Activated CD8-positive, alpha-beta T cell treated with anti-CD3 and anti-CD28 coated beads for 36 hours (primary cell): ENCODE measurements at regions of chr1 and their contacts with region 1.

Region 1: DNA sequence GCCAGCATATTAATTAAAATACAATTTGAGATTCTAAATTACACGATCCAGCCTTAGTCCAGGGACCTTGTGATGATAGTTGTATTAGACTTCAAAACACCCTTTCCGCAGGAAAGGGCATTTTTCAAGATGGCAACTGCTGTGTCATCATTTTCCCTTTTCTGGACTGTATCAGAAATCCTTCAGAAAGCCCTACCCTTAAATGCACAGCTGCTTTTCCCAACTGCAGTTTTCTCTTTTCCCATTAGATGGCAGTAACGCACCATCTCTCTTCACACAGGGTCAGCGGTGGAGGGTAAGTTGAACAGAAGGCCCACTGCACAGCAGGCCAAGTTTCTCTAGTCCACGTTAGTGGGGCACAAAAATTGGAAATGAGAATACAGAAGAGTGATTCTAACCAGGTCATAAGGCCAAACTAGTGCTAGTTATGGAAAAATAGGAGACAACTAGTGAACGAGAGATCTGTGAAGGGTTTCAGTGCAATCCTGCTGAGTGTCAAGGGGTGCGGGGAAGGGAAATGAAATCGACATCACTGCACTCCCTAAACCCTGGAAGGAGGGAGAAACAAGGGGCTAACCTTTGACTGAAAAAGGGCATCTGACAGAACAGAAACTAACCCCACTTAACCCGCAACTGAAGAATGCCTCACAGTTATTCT is 22.1 kb upstream of the TDRD10 start:
- DNase-seq: peak; percentile 69
- ATAC-seq: peak; percentile 94
- H3K4me3 Mint-ChIP-seq: no peak overlapping the region
- H3K27ac Mint-ChIP-seq: no peak overlapping the region
- H3K4me1 Mint-ChIP-seq: peaks cover 18% of the 10 kb centered on the region
- H3K27me3 Mint-ChIP-seq: peaks cover 4% of the 10 kb centered on the region
- CTCF ChIP-seq: peak; percentile 98

Region 2: GRCh38 chr1:154324669-154325582 is 155.0 kb before region 1 on chr1 and contains the start of gene ATP8B2:
- CTCF ChIA-PET with region 1: interaction called, 10 read pairs
- POLR2A ChIA-PET with region 1: no interaction called
- intact Hi-C with region 1: no loop called
- DNase-seq: peak; percentile 89
- ATAC-seq: peak; percentile 69
- H3K4me3 Mint-ChIP-seq: peak within 1 kb of the TSS; percentile 100
- H3K27ac Mint-ChIP-seq: peak within 1 kb of the TSS; percentile 96
- H3K4me1 Mint-ChIP-seq: peaks cover 39% of the 10 kb centered on the region
- H3K27me3 Mint-ChIP-seq: no peaks in the 10 kb centered on the region
- CTCF ChIP-seq: peak; percentile 96
- total RNA-seq, gene ATP8B2: 52.2 to 54.7 TPM

Region 3: GRCh38 chr1:154404984-154405761 is 74.7 kb before region 1 on chr1 and contains the start of gene IL6R:
- CTCF ChIA-PET with region 1: interaction called, 10 read pairs
- POLR2A ChIA-PET with region 1: no interaction called
- intact Hi-C with region 1: no loop called
- DNase-seq: peak; percentile 74
- ATAC-seq: peak; percentile 48
- H3K4me3 Mint-ChIP-seq: peak within 1 kb of the TSS; percentile 70
- H3K27ac Mint-ChIP-seq: peak within 1 kb of the TSS; percentile 78
- H3K4me1 Mint-ChIP-seq: peaks cover 89% of the 10 kb centered on the region
- H3K27me3 Mint-ChIP-seq: no peaks in the 10 kb centered on the region
- CTCF ChIP-seq: peak; percentile 42
- total RNA-seq, gene IL6R: 2.2 to 2.5 TPM

Region 4: GRCh38 chr1:154493276-154493675 is 13.4 kb after region 1 on chr1:
- CTCF ChIA-PET with region 1: interaction called, 30 read pairs
- POLR2A ChIA-PET with region 1: interaction called, 4 read pairs
- intact Hi-C with region 1: no loop called
- DNase-seq: peak; percentile 20
- ATAC-seq: peak; percentile 27
- H3K4me3 Mint-ChIP-seq: no peak overlapping the region
- H3K27ac Mint-ChIP-seq: no peak overlapping the region
- H3K4me1 Mint-ChIP-seq: peaks cover 39% of the 10 kb centered on the region
- H3K27me3 Mint-ChIP-seq: peaks cover 5% of the 10 kb centered on the region
- CTCF ChIP-seq: no peak

Region 5: DNA sequence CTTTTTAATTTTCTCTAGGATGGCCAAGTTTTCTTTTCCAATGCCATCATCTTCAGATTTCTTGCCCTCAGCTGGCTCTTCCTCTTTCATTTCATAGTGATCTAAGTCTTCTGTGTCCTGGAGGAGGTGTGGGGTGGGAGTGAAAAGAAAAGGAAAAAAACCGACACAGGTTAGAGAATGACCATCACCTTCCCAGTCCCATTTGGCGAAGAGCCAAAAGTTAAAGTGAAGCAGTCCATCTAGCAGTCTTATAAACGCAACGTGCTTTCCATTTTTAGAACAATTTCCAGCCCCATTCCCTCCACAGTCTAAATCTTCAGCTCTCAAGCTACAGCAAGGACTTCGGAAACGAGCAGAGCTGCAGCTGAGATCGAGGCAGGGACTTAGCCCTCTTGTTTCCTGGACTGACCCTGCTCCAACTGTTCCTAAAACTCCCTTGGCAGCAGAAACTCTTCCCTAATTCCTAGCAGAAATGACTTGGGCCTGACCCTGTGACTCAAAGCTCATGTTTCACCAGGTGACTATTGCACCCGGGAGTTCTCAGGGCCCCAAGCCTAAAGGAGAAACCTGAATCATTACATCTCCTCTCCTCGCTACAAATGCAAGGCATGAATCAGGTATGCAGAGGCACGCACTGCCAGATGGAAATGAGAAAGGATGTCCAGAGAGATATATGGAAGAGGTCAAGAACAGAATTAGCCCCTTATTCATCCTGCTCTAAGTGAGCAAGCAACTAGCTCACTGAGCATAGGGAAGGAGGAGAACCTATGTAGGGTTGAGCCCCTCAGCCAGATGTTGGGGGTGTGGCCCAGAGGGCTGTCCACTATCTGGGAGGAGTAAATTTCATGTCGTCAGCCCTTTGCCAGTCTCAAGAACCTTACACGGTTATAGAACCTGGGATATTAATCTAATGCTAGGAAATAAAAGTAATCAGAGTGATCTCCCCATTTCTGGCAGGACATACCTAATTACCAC is 73.5 kb after region 1 on chr1:
- CTCF ChIA-PET with region 1: interaction called, 53 read pairs
- POLR2A ChIA-PET with region 1: interaction called, 3 read pairs
- intact Hi-C with region 1: no loop called
- DNase-seq: no peak
- ATAC-seq: no peak
- H3K4me3 Mint-ChIP-seq: no peak overlapping the region
- H3K27ac Mint-ChIP-seq: no peak overlapping the region
- H3K4me1 Mint-ChIP-seq: peaks cover 29% of the 10 kb centered on the region
- H3K27me3 Mint-ChIP-seq: no peaks in the 10 kb centered on the region
- CTCF ChIP-seq: no peak